Left ventricle myocardium superior (tissue), 1 donor: ENCODE measurements at regions of chr15 and their contacts with region 1.

Region 1: GRCh38 chr15:90482124-90483011 is 47.4 kb upstream of the CRTC3 start:
- DNase-seq: no peak
- ATAC-seq: peak; percentile 66

Region 2: DNA sequence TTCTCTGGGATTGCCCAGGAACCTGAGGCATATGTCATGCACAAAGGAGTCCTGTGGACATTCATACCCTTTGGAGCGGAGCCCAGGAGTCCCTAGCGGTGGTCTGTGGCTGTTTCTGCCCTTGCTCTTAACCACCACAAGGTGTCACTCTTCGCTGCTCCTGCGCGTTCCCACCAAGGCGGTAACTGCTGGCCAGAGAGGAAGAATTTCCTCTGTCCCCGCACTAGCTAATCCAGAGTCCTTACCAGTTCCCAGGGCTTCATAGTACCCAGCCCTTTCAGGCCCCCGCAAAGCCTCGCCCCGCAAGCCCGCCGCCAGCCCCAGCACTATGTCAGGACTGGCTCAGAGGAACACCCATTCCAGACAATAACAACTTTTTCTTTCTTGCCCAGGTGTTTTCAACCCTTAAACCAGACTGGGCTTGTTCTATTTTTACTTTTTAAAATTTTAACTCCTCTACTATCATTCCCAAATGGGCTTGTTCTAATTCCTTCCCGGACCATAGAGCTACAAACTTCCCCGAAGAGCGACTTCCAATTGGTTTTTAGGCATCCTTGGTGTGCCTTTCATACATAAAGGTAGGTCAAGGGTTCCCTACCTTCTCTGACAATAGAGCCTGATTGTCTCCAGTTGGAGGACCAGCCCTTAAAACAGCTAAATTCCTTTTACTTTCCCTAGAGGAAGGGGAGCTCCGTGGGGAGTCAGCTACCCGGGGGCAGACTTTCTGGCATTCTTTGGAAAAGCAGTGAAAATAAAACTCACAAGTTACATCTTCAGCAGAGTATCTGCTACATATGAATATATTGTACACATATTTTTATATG is 162.1 kb before region 1 on chr15:
- intact Hi-C with region 1: loop called (anchors 10 kb)
- DNase-seq: peak; percentile 77
- ATAC-seq: peak; percentile 86

Region 3: DNA sequence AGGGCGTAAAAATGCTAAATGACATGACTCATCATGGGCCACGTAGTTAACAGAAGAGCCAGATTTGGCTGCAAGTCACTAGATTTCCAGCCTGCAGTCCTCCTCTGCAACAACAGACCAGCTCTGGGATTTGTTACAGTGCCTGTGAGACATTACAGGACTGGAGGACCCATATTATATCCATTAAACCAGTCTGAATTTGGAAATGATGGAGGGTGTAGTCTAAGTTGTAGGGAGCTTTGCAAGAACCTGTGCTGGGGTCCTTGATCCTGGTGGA is 119.5 kb before region 1 on chr15:
- intact Hi-C with region 1: loop called (anchors 5 kb)
- DNase-seq: no peak
- ATAC-seq: peak; percentile 73

Region 4: DNA sequence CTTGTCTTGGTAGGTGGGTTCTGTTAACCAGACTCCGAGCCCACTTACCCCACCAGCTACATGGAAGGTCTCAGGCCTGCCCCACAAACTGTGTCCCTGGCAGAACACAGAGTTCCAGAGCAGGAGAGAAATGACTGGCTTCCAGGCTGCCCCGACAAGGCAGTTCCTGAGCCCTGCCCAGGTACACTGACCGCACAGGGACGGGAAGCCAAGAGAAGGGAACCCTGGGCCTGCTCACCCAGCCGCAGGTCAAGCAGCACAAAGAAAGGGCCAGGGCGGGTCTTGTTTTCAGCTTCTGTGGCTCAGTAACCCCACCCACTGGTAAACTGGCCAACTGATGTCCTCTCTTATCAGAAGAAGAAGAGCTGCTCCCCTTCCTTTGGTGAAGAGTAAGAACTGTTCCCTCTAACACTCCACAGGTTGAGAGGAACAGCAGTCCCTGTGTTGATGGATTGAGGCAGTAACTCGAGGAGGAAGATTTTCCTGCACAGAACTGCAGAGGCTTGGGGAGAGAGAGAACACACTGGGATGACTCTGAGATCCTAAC is 115.7 kb after region 1 on chr15:
- intact Hi-C with region 1: no loop called
- DNase-seq: peak; percentile 63
- ATAC-seq: peak; percentile 69

Region 5: GRCh38 chr15:90620379-90621067 is 138.2 kb after region 1 on chr15:
- intact Hi-C with region 1: loop called (anchors 10 kb)
- DNase-seq: no peak
- ATAC-seq: peak; percentile 19

Region 6: DNA sequence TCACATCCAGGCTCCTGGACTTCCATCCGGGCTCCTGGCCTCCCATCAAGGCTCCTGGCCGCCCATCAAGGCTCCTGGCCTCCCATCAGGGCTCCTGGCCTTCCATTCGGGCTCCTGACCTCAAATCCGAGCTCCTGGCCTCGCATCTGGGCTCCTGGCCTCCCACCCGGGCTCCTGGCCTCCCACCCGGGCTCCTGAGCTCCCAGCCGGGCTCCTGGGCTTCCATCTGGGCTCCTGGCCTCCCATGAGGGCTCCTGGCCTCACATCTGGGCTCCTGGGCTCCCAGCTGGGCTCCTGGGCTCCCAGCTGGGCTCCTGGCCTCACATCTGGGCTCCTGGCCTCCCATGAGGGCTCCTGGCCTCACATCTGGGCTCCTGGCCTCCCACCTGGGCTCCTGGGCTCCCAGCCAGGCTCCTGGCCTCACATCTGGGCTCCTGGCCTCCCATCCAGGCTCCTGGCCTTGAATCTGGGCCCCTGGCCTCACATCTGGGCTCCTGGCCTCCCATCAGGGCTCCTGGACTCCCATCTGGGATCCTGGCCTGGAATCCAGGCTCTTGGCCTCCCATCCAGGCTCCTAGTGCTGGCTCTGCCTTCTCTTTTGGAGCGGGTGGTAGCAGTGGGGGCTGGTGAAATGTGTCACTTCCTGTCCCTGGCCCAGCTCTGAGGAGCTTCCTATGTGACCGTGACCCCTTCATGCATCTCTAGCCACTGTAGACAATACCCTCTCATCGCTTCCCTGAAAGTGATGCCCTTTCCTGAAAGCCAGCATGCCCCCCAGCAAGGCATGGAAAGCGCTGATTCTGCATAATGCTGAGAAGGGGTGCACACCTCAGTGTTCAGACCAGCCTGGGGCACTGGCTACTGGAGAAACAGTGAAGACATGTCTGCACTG is 172.1 kb after region 1 on chr15:
- intact Hi-C with region 1: no loop called
- DNase-seq: no peak
- ATAC-seq: peak; percentile 23

Region 7: DNA sequence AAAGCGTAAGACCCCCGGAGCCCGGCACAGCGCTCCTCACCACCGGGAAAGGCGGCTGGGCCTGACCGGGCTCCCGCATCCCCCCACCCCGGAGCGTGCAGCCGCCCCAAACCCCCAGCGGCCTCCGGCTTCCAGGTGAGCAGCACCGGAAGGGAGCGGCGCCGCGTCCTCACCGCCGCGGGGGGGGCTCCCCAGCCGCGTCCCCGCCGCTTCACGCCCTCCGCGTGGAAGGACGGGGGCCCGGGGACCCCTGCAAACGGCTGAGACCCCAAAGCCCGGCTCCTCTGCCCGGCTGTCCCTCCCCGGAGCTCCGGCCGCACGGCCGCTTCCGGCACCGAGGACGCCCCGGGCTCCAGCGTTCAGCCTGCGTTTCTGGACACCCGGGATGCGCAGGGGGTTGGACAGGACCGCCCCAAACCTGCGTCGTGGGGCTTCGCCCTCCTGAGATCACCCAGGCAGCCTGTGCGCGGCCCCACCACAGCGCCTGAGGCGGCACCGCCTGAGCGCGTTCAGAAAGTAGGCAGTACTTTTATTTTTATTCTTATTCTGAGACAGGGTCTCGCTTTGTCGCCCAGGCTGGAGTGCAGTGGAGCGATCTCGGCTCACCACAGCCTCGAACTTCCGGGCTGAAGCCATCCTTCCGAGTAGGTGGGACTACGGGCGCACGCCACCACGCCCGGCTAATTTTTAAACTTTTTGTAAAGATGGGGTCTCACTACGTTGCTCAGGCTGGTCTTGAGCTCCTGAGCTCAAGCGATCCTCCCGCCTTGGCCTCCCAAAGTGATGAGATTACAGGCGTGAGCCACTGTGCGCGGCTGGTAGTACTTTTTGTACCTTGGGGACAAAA is 183.1 kb after region 1 on chr15:
- intact Hi-C with region 1: no loop called
- DNase-seq: peak; percentile 82
- ATAC-seq: peak; percentile 92

Region 8: GRCh38 chr15:91165850-91166249 is 683.5 kb after region 1 on chr15:
- intact Hi-C with region 1: no loop called
- DNase-seq: no peak
- ATAC-seq: no peak